H1 (cell line): ENCODE measurements at regions of chr1 and their contacts with region 1.

Region 1: DNA sequence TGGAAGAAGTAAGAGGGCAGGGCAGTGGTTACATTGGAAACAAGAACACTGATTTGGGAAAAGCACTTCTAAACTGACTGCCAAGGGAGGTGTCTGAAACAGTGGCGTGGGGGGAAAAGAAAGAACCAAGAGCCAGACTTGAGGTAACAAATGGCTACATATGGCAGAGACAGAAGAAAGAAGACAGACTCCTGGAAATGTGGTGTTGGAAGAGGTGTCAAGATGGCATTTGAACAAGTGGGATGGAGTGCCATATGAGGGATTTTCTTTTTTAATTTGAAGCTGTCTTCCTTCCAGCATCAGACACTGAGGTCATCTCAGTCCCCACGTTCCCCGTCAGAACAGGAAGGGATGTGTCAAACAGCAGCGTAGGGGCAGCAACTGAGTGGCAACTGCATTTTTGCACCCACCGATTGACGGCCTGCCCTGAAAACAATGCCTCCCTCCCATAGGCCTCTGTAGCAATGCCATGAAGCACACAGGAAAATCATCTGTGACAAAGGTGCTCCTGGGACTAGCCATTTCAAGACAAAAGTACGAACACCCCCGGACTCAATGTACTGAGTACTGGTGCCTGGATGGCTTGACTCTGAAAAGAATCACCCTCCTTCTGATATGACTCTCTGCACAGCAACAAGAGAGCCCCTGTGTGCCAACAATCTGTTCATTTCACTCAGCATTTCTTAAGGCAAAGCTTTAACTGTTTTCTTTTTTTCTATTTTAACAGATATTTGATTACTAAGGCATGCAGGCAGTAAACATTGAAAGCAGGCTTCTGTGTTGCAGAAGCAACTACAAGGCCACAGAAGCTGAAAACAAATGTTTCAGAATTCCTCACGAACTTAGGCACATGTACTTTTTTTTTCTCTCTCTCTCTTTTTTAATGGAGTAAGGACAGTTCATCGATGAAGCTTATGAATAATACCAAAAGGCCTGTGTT is 37.0 kb downstream of the LPAR3 start:
- DNase-seq: no peak
- H3K4me3 ChIP-seq: no peak overlapping the region
- H3K27ac ChIP-seq: no peak overlapping the region
- H3K4me1 ChIP-seq: no peaks in the 10 kb centered on the region
- H3K27me3 ChIP-seq: no peaks in the 10 kb centered on the region
- CTCF ChIP-seq: no peak
- EP300 ChIP-seq: no peak
- POLR2A ChIP-seq: no peak
- RAD21 ChIP-seq: no peak

Region 2: GRCh38 chr1:84462118-84462517 is 393.8 kb before region 1 on chr1:
- CTCF ChIA-PET with region 1: no interaction called
- POLR2A ChIA-PET with region 1: no interaction called
- DNase-seq: no peak
- H3K4me3 ChIP-seq: no peak overlapping the region
- H3K27ac ChIP-seq: no peak overlapping the region
- H3K4me1 ChIP-seq: no peaks in the 10 kb centered on the region
- H3K27me3 ChIP-seq: no peaks in the 10 kb centered on the region; a peak in 1 of 7 replicates
- CTCF ChIP-seq: no peak
- EP300 ChIP-seq: no peak
- POLR2A ChIP-seq: no peak
- RAD21 ChIP-seq: no peak

Region 3: DNA sequence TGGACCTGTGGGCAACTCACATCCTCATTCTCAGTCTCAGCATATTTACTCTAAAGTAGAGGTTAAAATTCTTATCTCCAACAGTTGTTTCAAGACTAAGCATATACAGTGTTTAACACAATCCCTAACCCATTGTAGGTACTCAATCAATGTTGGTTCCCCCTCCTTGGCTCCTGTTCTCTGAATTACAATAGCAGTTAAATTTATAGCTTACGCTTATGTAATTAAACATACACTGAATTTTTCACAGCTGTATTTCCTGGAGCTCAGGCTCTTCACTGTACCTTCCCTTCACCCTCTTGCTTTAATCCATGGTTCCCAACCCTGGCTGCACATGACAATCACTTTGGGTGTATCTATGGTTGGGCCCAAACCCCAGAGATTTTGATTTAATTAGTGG is 52.4 kb before region 1 on chr1:
- CTCF ChIA-PET with region 1: no interaction called
- POLR2A ChIA-PET with region 1: no interaction called
- DNase-seq: no peak
- H3K4me3 ChIP-seq: no peak overlapping the region
- H3K27ac ChIP-seq: no peak overlapping the region
- H3K4me1 ChIP-seq: no peaks in the 10 kb centered on the region
- H3K27me3 ChIP-seq: no peaks in the 10 kb centered on the region; a peak in 1 of 7 replicates
- CTCF ChIP-seq: no peak
- EP300 ChIP-seq: no peak
- POLR2A ChIP-seq: no peak
- RAD21 ChIP-seq: no peak

Region 4: DNA sequence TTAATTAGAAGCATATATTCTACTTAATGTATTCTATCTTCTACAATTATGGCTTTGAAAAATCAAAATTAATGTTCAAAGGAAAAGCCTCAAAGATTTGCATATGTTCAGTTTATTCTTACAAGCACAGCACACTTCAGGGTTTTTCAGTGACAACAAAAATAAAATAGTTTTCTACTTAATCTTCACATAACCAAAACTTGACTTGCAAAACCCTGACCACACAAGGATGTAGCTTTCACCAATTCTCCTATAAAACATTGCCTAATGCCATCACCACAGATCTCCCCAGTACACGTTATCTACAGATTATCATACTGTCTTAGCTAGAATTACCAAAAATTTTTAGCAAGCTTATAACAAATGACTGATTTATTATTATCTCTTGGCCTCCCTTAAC is 13.8 kb after region 1 on chr1:
- CTCF ChIA-PET with region 1: interaction called, 10 read pairs
- POLR2A ChIA-PET with region 1: interaction called, 7 read pairs
- DNase-seq: no peak
- H3K4me3 ChIP-seq: no peak overlapping the region
- H3K27ac ChIP-seq: no peak overlapping the region
- H3K4me1 ChIP-seq: no peaks in the 10 kb centered on the region
- H3K27me3 ChIP-seq: no peaks in the 10 kb centered on the region
- CTCF ChIP-seq: no peak
- EP300 ChIP-seq: no peak
- POLR2A ChIP-seq: no peak
- RAD21 ChIP-seq: no peak